ENCODE measurements at regions of chr4 and their contacts with region 1.

Region 1: GRCh38 chr4:128060699-128061565 is at the start of gene LARP1B:
- DNase-seq: peak; percentile 94 to 95
- H3K4me3 ChIP-seq: peak within 1 kb of the TSS; percentile 80 to 96
- H3K27ac ChIP-seq: peak within 1 kb of the TSS; percentile 88 to 95
- H3K4me1 ChIP-seq: no peaks in the 10 kb centered on the region
- H3K27me3 ChIP-seq: no peaks in the 10 kb centered on the region
- CTCF ChIP-seq: peak in 1 of 4 experiments; percentile 2
- POLR2A ChIP-seq: peak; percentile 92 to 94
- total RNA-seq, gene LARP1B: 11.2 to 41.5 (median 36.1) TPM

Region 2: GRCh38 chr4:127965062-127965802 is 95.7 kb before region 1 on chr4 and contains the starts of genes ABHD18 and MFSD8:
- intact Hi-C with region 1: loop called (anchors 10 kb)
- DNase-seq: peak; percentile 98
- H3K4me3 ChIP-seq: peak within 1 kb of the TSS; percentile 64 to 80
- H3K27ac ChIP-seq: peak within 1 kb of the TSS; percentile 87 to 89
- H3K4me1 ChIP-seq: peaks cover 4 to 5% of the 10 kb centered on the region in 2 donors
- H3K27me3 ChIP-seq: no peaks in the 10 kb centered on the region
- CTCF ChIP-seq: peak; percentile 26 to 52 (median 49)
- POLR2A ChIP-seq: peak; percentile 74 to 77
- total RNA-seq, gene ABHD18: 4.7 to 16.1 (median 12.5) TPM
- total RNA-seq, gene MFSD8: 36.4 to 121 (median 61.0) TPM